ENCODE measurements at regions of chrX and their contacts with region 1.

Region 1: GRCh38 chrX:75038925-75039324 is 113.7 kb upstream of the NEXMIF start:
- DNase-seq: peak; percentile 1
- H3K4me3 ChIP-seq: no peak overlapping the region
- H3K27ac ChIP-seq: no peak overlapping the region
- H3K4me1 ChIP-seq: no peaks in the 10 kb centered on the region
- H3K27me3 ChIP-seq: no peaks in the 10 kb centered on the region
- CTCF ChIP-seq: peak; percentile 19 to 45

Region 2: GRCh38 chrX:75086731-75087195 is 47.8 kb after region 1 on chrX:
- CTCF ChIA-PET with region 1: no interaction called
- dilution Hi-C with region 1: no loop called
- in situ Hi-C with region 1: no loop called
- intact Hi-C with region 1: no loop called
- DNase-seq: no peak
- H3K4me3 ChIP-seq: no peak overlapping the region
- H3K27ac ChIP-seq: no peak overlapping the region
- H3K4me1 ChIP-seq: no peaks in the 10 kb centered on the region
- H3K27me3 ChIP-seq: no peaks in the 10 kb centered on the region
- CTCF ChIP-seq: no peak

Region 3: GRCh38 chrX:75603833-75604232 is 564.9 kb after region 1 on chrX:
- CTCF ChIA-PET with region 1: no interaction called
- dilution Hi-C with region 1: no loop called
- in situ Hi-C with region 1: no loop called
- intact Hi-C with region 1: loop called (anchors 1 kb)
- DNase-seq: peak; percentile 11
- H3K4me3 ChIP-seq: no peak overlapping the region
- H3K27ac ChIP-seq: no peak overlapping the region
- H3K4me1 ChIP-seq: no peaks in the 10 kb centered on the region
- H3K27me3 ChIP-seq: no peaks in the 10 kb centered on the region
- CTCF ChIP-seq: peak; percentile 55 to 67

Region 4: GRCh38 chrX:75655627-75656026 is 616.7 kb after region 1 on chrX:
- CTCF ChIA-PET with region 1: no interaction called
- dilution Hi-C with region 1: no loop called
- in situ Hi-C with region 1: no loop called
- intact Hi-C with region 1: no loop called
- DNase-seq: no peak
- H3K4me3 ChIP-seq: no peak overlapping the region
- H3K27ac ChIP-seq: no peak overlapping the region
- H3K4me1 ChIP-seq: no peaks in the 10 kb centered on the region
- H3K27me3 ChIP-seq: peaks cover 2% of the 10 kb centered on the region
- CTCF ChIP-seq: no peak

Region 5: GRCh38 chrX:76014321-76014720 is 975.4 kb after region 1 on chrX:
- CTCF ChIA-PET with region 1: no interaction called
- dilution Hi-C with region 1: no loop called
- in situ Hi-C with region 1: no loop called
- intact Hi-C with region 1: no loop called
- DNase-seq: no peak
- H3K4me3 ChIP-seq: no peak overlapping the region
- H3K27ac ChIP-seq: no peak overlapping the region
- H3K4me1 ChIP-seq: no peaks in the 10 kb centered on the region
- H3K27me3 ChIP-seq: no peaks in the 10 kb centered on the region
- CTCF ChIP-seq: no peak